ENCODE measurements at regions of chr2 and their contacts with region 1.

Region 1: DNA sequence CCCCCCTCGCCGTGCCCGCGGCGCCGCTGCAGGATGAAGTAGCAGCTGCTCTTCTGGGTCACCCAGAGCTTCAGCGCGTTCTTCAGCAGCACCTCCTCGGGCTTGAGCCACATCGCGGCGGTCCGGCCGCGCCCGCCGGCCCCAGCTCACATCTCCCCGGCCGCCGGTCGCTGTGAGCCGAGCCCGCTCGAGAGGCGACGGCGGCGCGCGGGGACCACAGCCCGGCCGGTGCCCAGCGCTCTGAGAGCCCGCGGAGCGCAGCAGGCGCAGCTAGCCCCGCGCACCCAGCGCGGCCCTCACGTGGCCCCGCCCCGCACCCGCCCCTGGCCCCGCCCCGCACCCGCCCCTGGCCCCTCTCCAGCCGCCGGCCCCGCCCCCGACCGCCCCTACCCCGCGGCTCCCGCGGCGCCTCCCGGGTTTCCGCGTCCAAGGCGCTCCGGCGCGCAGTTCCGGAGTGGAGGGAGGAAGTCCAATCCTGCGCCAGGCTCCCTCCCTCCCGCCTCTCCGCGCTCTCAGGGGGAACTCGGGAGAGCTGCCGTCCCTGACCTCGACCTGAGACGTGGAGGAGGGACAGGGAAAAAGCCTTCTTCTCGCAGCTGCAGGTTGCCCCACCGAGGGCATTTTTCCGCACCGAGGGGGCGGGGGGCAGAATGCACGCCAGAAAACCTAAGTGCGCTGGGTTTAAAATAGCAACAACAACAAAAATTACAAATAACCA is at the start of gene TBC1D8:
- DNase-seq: peak; percentile 85
- ATAC-seq: peak; percentile 68
- H3K4me3 ChIP-seq: peak within 1 kb of the TSS; percentile 94
- H3K27ac ChIP-seq: peak within 1 kb of the TSS; percentile 80
- H3K4me1 ChIP-seq: peaks cover 44% of the 10 kb centered on the region
- H3K27me3 ChIP-seq: no peaks in the 10 kb centered on the region
- CTCF ChIP-seq: no peak
- total RNA-seq, gene TBC1D8: 39.7 and 41.7 TPM in 2 replicates

Region 2: GRCh38 chr2:101012706-101013181 is 138.6 kb before region 1 on chr2:
- CTCF ChIA-PET with region 1: interaction called, 9 read pairs
- POLR2A ChIA-PET with region 1: no interaction called
- intact Hi-C with region 1: loop called (anchors 1 kb)
- DNase-seq: peak; percentile 78
- ATAC-seq: no peak; the same call in 1 of the 2 replicates
- H3K4me3 ChIP-seq: no peak overlapping the region
- H3K27ac ChIP-seq: no peak overlapping the region
- H3K4me1 ChIP-seq: no peaks in the 10 kb centered on the region
- H3K27me3 ChIP-seq: no peaks in the 10 kb centered on the region
- CTCF ChIP-seq: peak; percentile 89

Region 3: GRCh38 chr2:101036562-101037457 is 114.5 kb before region 1 on chr2:
- CTCF ChIA-PET with region 1: interaction called, 3 read pairs
- POLR2A ChIA-PET with region 1: no interaction called
- intact Hi-C with region 1: loop called (anchors 1 kb)
- DNase-seq: peak; percentile 60
- ATAC-seq: peak; percentile 15; the same call in 1 of the 2 replicates
- H3K4me3 ChIP-seq: no peak overlapping the region
- H3K27ac ChIP-seq: no peak overlapping the region
- H3K4me1 ChIP-seq: no peaks in the 10 kb centered on the region
- H3K27me3 ChIP-seq: no peaks in the 10 kb centered on the region
- CTCF ChIP-seq: peak; percentile 75

Region 4: DNA sequence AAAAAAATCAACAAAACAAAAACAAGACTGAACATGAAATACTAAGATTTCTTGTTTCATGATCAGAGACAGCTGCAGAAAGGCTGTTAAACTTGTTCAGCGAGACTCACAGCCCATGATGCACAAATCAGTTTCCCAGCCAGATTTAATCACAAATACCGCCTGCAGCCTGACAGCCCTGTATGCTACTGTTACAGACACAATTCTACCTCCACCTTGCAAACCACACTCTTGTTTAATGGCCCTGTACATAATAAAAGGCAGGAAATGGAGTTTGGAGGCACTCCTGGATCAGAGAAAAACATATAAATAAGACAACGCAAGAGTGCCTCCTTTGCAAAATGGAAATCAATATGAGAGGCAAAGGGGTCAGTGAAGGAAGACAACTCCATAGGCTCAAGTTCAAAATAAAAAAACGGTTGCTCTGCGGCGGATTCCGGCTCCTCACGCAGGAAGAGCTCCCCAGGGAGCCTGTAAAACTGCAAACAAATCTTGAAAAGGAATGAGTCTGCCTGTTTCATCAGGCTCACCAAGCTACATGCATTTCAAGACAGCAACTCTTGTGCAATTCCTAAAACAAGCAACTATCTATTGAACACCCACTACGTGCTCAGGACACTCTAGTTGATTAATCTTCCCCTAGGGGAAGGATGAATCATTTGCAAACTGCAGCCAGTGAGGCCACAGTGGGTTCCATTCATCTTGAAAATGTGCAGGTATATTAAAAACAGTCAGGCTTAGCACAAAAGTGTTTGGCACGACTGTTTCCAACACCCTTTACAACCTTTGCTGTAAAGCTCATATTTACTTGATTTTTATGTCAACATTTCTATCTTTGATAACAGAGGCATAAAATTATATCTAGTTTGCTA is 37.7 kb before region 1 on chr2:
- CTCF ChIA-PET with region 1: no interaction called
- POLR2A ChIA-PET with region 1: no interaction called
- intact Hi-C with region 1: loop called (anchors 5 kb)
- DNase-seq: peak; percentile 90
- ATAC-seq: peak; percentile 73
- H3K4me3 ChIP-seq: peak overlapping the region; percentile 40; the same call in 1 of the 2 replicates
- H3K27ac ChIP-seq: peak overlapping the region; percentile 94
- H3K4me1 ChIP-seq: peaks cover 61% of the 10 kb centered on the region
- H3K27me3 ChIP-seq: no peaks in the 10 kb centered on the region
- CTCF ChIP-seq: no peak

Region 5: GRCh38 chr2:101120172-101120996 is 30.9 kb before region 1 on chr2:
- CTCF ChIA-PET with region 1: no interaction called
- POLR2A ChIA-PET with region 1: interaction called, 18 read pairs
- intact Hi-C with region 1: loop called (anchors 1 kb)
- DNase-seq: peak; percentile 95
- ATAC-seq: peak; percentile 47
- H3K4me3 ChIP-seq: no peak overlapping the region
- H3K27ac ChIP-seq: peak overlapping the region; percentile 98
- H3K4me1 ChIP-seq: peaks cover 56% of the 10 kb centered on the region
- H3K27me3 ChIP-seq: no peaks in the 10 kb centered on the region
- CTCF ChIP-seq: no peak

Region 6: GRCh38 chr2:101205521-101205998 is 54.3 kb after region 1 on chr2:
- CTCF ChIA-PET with region 1: interaction called, 8 read pairs
- POLR2A ChIA-PET with region 1: no interaction called
- intact Hi-C with region 1: loop called (anchors 2 kb)
- DNase-seq: peak; percentile 84
- ATAC-seq: peak; percentile 90
- H3K4me3 ChIP-seq: peak overlapping the region; percentile 52
- H3K27ac ChIP-seq: no peak overlapping the region
- H3K4me1 ChIP-seq: peaks cover 8% of the 10 kb centered on the region
- H3K27me3 ChIP-seq: no peaks in the 10 kb centered on the region
- CTCF ChIP-seq: peak; percentile 73

Measured in PC-3 (cell line).